ENCODE measurements at regions of chr1 and their contacts with region 1.

Region 1: GRCh38 chr1:9384751-9385245 is 92.1 kb downstream of the SPSB1 start:
- DNase-seq: peak; percentile 86
- H3K4me3 ChIP-seq: no peak overlapping the region
- H3K27ac ChIP-seq: peak overlapping the region; percentile 59 to 70
- H3K4me1 ChIP-seq: peaks cover 16% of the 10 kb centered on the region
- H3K27me3 ChIP-seq: no peaks in the 10 kb centered on the region
- CTCF ChIP-seq: no peak
- POLR2A ChIP-seq: no peak

Region 2: GRCh38 chr1:9239622-9240401 is 145.0 kb before region 1 on chr1:
- intact Hi-C with region 1: no loop called
- DNase-seq: no peak
- H3K4me3 ChIP-seq: no peak overlapping the region
- H3K27ac ChIP-seq: peak overlapping the region; percentile 92 to 95
- H3K4me1 ChIP-seq: peaks cover 59% of the 10 kb centered on the region
- H3K27me3 ChIP-seq: no peaks in the 10 kb centered on the region
- CTCF ChIP-seq: no peak
- POLR2A ChIP-seq: no peak

Region 3: GRCh38 chr1:9413148-9413876 is 28.5 kb after region 1 on chr1:
- intact Hi-C with region 1: loop called (anchors 2 kb)
- DNase-seq: no peak
- H3K4me3 ChIP-seq: no peak overlapping the region
- H3K27ac ChIP-seq: peak overlapping the region; percentile 42 to 62
- H3K4me1 ChIP-seq: no peaks in the 10 kb centered on the region
- H3K27me3 ChIP-seq: no peaks in the 10 kb centered on the region
- CTCF ChIP-seq: peak in 1 of 4 experiments; percentile 6
- POLR2A ChIP-seq: no peak

Region 4: DNA sequence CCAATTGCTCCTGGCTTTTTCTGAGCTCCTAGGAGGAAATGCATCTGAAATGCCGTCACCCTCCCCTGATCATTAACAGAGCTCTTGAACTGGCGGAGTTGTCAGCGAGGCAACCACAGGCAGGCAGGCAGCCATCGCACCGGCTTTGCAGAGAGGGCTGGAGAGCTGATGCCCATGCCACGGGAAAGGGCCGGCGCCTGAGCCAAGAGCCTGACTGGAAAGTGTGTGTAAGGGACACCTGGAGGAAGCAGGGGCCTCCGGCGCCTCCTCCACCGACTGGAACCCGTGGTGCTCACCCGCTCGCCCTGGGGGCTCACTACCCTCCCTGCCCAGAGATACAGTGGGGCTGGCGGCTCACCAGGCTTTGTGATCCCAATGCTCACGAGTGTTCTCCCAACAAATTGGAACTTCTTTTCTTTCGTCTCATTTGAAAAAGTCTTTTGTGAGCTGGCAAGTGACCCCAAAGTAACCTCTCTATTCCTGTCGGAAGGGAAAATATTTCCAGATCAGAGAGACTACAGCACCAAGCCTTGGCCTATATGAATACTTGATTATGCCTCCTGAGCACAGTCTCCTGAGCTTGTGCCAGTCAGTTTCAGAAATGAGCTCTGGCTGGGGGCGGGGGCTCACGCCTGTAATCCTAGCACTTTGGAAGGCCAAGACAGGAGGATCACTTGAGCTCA is 56.8 kb after region 1 on chr1:
- intact Hi-C with region 1: loop called (anchors 5 kb)
- DNase-seq: peak; percentile 67
- H3K4me3 ChIP-seq: no peak overlapping the region
- H3K27ac ChIP-seq: peak overlapping the region; percentile 21 to 54
- H3K4me1 ChIP-seq: peaks cover 16% of the 10 kb centered on the region
- H3K27me3 ChIP-seq: no peaks in the 10 kb centered on the region
- CTCF ChIP-seq: no peak
- POLR2A ChIP-seq: no peak